ENCODE measurements at regions of chr7 and their contacts with region 1.

Region 1: DNA sequence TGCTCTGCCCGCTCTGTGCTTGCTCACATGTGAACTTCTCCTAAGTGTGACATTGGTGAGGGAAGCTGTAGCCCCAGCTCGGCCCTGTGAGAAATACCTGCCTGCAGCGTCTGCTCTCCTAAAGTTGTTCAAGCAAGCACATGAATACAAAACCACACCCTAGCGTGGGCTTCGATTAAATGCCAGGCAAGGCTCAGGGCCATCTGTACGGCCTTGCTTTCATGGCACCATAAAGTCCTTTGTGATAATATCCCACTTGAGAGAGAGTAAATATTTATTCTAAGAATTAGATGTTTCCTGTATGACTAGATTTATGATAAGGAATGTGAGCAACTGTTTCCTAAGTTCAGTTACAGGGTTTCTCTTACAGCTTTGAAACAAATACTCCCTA is 262.8 kb upstream of the KLF14 start:
- DNase-seq: no peak
- ATAC-seq: peak in 1 of 2 donors; percentile 19
- H3K4me3 ChIP-seq: peak overlapping the region in 2 of 4 donors; percentile 11 to 13
- H3K27ac ChIP-seq: peak overlapping the region; percentile 39 to 66 (median 48)
- H3K4me1 ChIP-seq: peaks cover 92 to 96% of the 10 kb centered on the region in 2 donors
- H3K27me3 ChIP-seq: no peaks in the 10 kb centered on the region
- CTCF ChIP-seq: no peak
- POLR2A ChIP-seq: no peak

Region 2: GRCh38 chr7:130961128-130961601 is 35.7 kb before region 1 on chr7:
- in situ Hi-C with region 1: no loop called
- intact Hi-C with region 1: loop called (anchors 5 kb)
- DNase-seq: no peak
- ATAC-seq: peak in 1 of 2 donors; percentile 23
- H3K4me3 ChIP-seq: no peak overlapping the region
- H3K27ac ChIP-seq: peak overlapping the region; percentile 11 to 61 (median 30)
- H3K4me1 ChIP-seq: peaks cover 56 to 64% of the 10 kb centered on the region in 2 donors
- H3K27me3 ChIP-seq: no peaks in the 10 kb centered on the region
- CTCF ChIP-seq: no peak
- POLR2A ChIP-seq: no peak

Measured in gastrocnemius medialis (tissue), 4 donors.